Calu3 (cell line): ENCODE measurements at regions of chr3 and their contacts with region 1.

Region 1: DNA sequence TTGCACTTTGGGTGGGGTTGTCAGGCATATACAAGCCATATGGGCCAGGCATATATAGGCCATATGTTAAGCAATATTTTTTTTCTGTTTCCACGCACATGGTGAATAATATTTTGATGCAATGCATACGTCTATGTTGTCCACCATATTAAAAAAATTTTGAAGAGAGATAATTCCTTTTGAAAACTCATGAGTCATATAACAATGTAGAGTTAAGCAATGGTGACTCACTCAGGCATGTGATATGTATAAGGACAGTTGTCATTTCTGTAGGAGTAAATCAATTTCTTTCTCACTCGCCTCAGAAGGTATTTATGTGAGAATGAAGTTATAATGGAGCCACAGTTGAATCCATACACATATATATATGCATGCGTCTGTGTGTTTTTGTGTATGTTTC is 272.6 kb downstream of the EPHA3 start:
- DNase-seq: no peak
- H3K4me3 Mint-ChIP-seq: no peak overlapping the region
- H3K27ac Mint-ChIP-seq: peak overlapping the region; percentile 47
- H3K4me1 Mint-ChIP-seq: peaks cover 9% of the 10 kb centered on the region
- H3K27me3 Mint-ChIP-seq: no peaks in the 10 kb centered on the region
- CTCF ChIP-seq: no peak

Region 2: GRCh38 chr3:89320186-89320585 is 59.8 kb before region 1 on chr3:
- CTCF ChIA-PET with region 1: no interaction called
- intact Hi-C with region 1: loop called (anchors 10 kb)
- DNase-seq: no peak
- H3K4me3 Mint-ChIP-seq: no peak overlapping the region
- H3K27ac Mint-ChIP-seq: no peak overlapping the region
- H3K4me1 Mint-ChIP-seq: no peaks in the 10 kb centered on the region
- H3K27me3 Mint-ChIP-seq: no peaks in the 10 kb centered on the region
- CTCF ChIP-seq: no peak

Region 3: DNA sequence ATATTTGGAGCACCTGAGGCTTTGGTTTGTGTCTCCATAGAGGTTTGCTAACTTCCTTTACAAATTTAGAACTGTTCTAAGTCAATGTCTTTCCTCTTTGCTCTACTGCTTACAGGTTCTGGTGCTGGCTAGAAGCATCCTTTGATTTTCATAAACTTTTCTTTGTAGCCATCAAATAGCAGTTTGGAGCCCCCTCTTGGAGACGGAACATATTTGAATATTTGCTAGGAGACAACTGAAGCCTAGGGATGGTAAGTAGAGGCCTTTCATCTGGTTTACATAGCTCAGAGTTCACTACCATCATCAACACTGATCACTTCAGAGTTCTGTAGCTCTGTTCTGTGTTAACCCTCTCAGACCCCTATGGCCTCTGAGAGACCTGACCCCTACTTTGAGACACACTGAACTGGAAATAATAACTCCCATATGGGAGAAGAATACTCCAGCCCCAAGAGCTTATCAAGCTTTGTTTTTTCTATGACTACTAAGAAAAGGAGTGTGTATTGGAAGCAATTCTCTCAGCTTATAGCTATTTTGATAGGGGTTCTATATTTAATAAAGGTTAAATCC is 147.8 kb after region 1 on chr3:
- CTCF ChIA-PET with region 1: no interaction called
- intact Hi-C with region 1: no loop called
- DNase-seq: no peak
- H3K4me3 Mint-ChIP-seq: no peak overlapping the region
- H3K27ac Mint-ChIP-seq: no peak overlapping the region
- H3K4me1 Mint-ChIP-seq: peaks cover 9% of the 10 kb centered on the region
- H3K27me3 Mint-ChIP-seq: no peaks in the 10 kb centered on the region
- CTCF ChIP-seq: no peak